ENCODE measurements at regions of chrX and their contacts with region 1.

Region 1: GRCh38 chrX:119075270-119076025 is 2.7 kb downstream of the CT47C1 start:
- DNase-seq: peak; percentile 67
- ATAC-seq: peak; percentile 76
- H3K4me3 ChIP-seq: no peak overlapping the region
- H3K27ac ChIP-seq: no peak overlapping the region
- H3K4me1 ChIP-seq: peaks cover 11% of the 10 kb centered on the region; the same call in 1 of the 2 replicates
- H3K27me3 ChIP-seq: no peaks in the 10 kb centered on the region
- CTCF ChIP-seq: no peak

Region 2: GRCh38 chrX:118974088-118974907 is 101.2 kb before region 1 on chrX and contains the start of gene LONRF3:
- CTCF ChIA-PET with region 1: no interaction called
- POLR2A ChIA-PET with region 1: no interaction called
- intact Hi-C with region 1: no loop called
- DNase-seq: peak; percentile 67
- ATAC-seq: peak; percentile 34
- H3K4me3 ChIP-seq: peak within 1 kb of the TSS; percentile 78
- H3K27ac ChIP-seq: peak within 1 kb of the TSS; percentile 56; the same call in 1 of the 2 replicates
- H3K4me1 ChIP-seq: peaks cover 25% of the 10 kb centered on the region
- H3K27me3 ChIP-seq: no peaks in the 10 kb centered on the region
- CTCF ChIP-seq: no peak
- total RNA-seq, gene LONRF3: 14.5 and 15.6 TPM in 2 replicates

Region 3: DNA sequence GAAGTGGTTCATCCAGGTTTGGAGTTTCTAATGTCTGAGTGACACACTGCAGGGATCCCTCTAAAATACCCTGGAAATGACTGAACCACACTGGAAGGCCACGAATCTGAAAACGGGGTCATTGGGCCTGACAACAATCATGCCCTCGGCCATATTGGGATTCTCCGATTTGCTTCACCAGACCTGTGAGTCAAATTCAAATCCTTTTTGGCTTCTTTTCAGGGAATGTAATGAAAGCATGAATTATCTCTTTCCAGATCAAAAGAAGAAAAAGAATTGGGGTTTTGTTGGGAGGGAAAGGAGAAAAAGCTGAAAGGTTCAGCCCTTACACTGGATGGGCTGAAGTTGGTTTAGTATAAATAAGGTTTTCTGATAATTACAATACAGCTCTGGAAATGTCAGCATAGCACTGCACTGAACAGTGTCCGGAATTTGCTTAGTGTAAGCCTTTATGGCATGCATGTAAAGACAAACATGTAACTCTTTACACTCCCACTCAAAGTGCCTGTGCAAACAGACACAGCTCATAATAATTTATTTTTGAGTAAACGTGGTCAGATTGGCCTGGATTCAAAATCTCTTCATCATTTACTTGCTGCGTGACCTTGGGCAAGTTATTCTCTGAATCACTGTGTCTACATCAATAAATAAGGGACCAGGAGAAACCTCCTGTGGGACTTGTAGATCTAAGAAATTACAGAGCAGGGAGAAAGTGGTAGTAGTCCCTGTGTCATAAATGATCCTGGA is 18.7 kb after region 1 on chrX:
- CTCF ChIA-PET with region 1: interaction called, 5 read pairs
- POLR2A ChIA-PET with region 1: interaction called, 4 read pairs
- intact Hi-C with region 1: loop called (anchors 1 kb)
- DNase-seq: peak; percentile 98
- ATAC-seq: peak; percentile 98
- H3K4me3 ChIP-seq: peak overlapping the region; percentile 39
- H3K27ac ChIP-seq: peak overlapping the region; percentile 97
- H3K4me1 ChIP-seq: peaks cover 35% of the 10 kb centered on the region
- H3K27me3 ChIP-seq: no peaks in the 10 kb centered on the region
- CTCF ChIP-seq: no peak